Activated T-helper 1 cell treated with anti-CD3 and anti-CD28 coated beads, Interleukin-12 subunit alpha, Interleukin-12 subunit beta, Interleukin-2, Interleukin-4 antibody, amounts not matched to agents 30 ng/mL and 10 ng/mL and 1 ng/mL, durations not matched to agents 14 hours and 24 hours and 36 hours (primary cell): ENCODE measurements at regions of chr11 and their contacts with region 1.

Region 1: DNA sequence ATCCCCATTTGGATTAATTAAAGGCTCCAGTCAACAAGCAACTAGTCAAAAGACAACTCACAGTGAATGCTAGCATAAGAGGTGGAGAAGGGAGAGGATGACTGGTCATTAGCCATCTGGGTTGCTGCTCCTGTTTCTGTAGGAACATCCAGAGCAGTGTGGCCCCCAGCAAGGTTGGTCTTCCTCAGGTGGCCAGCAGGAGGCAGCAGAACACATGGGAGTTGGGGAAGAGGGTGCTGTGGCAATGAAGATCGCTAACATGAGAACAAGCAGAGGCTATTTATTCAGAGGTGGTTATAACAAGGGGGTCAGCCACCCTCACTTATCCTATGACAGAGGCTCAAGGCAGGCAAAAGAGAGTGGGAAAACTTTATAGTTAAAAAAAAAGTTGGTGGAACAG is 21.3 kb downstream of the IZUMO1R start:
- DNase-seq: peak; percentile 44
- H3K4me3 Mint-ChIP-seq: no peak overlapping the region
- H3K27ac Mint-ChIP-seq: no peak overlapping the region
- H3K4me1 Mint-ChIP-seq: no peaks in the 10 kb centered on the region
- H3K27me3 Mint-ChIP-seq: peaks cover 4% of the 10 kb centered on the region

Region 2: GRCh38 chr11:93476796-93477195 is 848.9 kb before region 1 on chr11:
- intact Hi-C with region 1: no loop called
- DNase-seq: no peak
- H3K4me3 Mint-ChIP-seq: no peak overlapping the region
- H3K27ac Mint-ChIP-seq: no peak overlapping the region
- H3K4me1 Mint-ChIP-seq: no peaks in the 10 kb centered on the region
- H3K27me3 Mint-ChIP-seq: no peaks in the 10 kb centered on the region

Region 3: DNA sequence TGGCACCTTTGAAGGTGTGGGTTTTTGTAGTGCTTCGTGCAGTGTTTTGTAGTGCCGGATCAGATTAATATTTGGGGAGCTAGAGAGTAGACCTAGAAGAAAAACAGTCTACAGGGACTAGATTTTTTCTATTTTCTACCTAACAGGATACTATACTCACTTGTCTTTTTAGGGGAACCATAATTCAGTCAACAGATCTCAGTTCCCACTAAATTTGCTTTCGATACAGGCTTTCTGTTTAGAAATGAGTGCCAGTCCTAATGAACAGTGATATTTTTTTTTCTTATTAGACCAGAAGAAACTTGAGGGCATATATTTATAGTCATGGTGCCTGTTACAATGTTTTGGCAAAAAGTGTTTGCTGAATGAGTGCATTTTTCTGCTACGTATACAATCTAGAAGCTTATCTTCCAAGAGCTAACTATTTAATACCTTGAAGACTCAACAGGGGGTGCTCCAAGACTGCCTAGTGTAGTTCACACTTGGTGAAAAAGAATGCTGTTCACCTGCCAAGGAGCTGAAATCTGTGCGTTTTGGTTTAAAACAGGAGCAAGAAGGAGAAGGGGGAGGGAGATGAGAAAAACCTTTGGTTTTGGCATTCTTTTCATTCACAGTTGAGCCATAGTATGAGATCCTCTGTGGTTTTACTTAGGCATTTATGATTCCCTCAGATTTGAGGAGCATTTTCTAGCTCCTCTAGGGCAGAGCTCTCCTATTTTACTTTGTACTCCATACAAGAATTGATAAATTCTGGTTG is 430.4 kb before region 1 on chr11:
- intact Hi-C with region 1: loop called (anchors 1 kb)
- DNase-seq: no peak
- H3K4me3 Mint-ChIP-seq: no peak overlapping the region
- H3K27ac Mint-ChIP-seq: no peak overlapping the region
- H3K4me1 Mint-ChIP-seq: no peaks in the 10 kb centered on the region
- H3K27me3 Mint-ChIP-seq: peaks cover 7% of the 10 kb centered on the region

Region 4: DNA sequence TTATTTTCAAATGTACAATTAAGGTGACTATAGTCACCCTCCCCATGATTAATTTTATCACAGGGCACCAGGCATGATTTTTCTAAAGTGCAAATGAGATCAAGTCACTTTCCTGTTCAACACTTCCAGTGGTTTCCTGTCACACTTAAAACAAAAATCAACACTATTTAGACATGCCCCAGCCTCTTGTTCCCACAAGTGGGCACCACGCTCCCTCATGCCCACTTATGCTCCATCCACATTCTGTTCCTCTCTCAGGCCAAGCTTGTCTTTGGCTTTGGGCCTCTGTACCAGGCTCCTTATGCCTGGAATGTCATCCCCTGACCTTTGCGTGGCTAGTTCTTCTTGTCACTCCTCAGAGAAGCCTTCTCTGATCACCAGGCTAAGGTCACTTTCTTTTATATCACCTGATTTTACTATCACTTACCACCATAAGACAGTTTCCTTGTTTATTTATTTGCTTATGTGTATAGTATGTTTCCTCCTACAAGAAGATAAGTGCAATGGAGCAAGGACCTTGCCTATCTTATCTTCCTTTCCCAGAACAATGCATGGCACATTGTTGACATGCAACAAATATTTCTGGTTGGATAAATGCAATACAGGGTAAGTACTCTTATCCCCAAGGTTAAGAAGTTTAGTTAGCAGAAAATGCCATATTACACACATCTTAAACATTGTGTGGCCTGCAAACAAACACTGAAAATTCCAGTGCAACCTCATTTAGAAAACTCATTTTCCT is 248.0 kb before region 1 on chr11:
- intact Hi-C with region 1: no loop called
- DNase-seq: no peak
- H3K4me3 Mint-ChIP-seq: no peak overlapping the region
- H3K27ac Mint-ChIP-seq: no peak overlapping the region
- H3K4me1 Mint-ChIP-seq: no peaks in the 10 kb centered on the region
- H3K27me3 Mint-ChIP-seq: no peaks in the 10 kb centered on the region

Region 5: DNA sequence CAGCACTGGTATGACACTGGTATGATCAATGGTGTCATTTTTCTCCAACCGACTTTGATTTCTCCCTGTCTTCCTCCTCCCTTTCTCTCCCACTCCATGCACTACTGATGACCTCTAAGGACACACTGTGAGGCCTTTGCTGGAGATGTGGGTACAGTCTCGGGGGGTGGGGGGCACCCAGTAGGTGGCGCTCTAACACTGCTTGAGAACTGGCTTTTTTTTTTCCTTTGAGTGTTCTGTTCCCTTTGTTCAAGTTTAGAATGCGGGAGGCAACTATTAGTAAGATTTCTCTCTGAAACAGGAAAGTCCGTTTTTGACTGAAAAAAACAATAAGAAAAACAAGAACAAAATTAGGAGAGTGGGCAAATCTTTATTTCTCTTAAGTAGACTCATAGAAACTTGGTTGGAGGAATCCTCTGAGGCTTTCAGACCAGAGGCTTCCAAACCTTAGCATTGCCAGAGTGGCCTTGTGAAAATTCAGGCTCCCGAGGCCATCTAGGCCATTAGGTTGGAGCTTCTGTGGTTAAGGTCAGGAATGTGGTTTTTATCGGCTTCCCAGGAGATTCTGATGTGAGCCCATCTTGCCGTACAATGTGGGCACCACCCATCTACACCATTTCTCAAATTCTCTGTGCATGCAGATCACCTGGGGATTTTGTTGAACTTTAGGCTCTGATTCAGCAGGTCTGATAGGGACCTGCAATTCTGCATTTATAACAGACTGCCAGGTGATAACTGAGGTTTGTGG is 153.8 kb before region 1 on chr11:
- intact Hi-C with region 1: loop called (anchors 1 kb)
- DNase-seq: no peak
- H3K4me3 Mint-ChIP-seq: no peak overlapping the region
- H3K27ac Mint-ChIP-seq: no peak overlapping the region
- H3K4me1 Mint-ChIP-seq: peaks cover 16% of the 10 kb centered on the region
- H3K27me3 Mint-ChIP-seq: no peaks in the 10 kb centered on the region

Region 6: DNA sequence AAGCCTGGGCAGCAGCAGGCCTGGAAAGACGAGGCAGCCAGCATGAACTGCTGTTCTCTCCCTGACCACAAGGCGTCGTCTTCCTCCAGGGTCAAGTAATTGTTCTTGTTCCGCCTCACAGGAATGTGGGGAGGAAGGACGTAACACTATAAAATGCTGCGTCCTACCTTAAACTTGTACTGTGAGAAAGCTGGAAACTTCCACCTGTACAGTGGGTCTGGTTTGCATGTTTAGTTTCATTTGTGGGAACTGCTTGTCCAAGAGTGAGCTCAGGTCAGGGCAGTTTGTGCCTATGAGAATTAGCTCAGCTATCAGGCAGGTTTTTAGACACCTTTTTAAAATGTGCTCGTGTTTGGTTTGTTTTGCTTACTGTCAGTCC is 141.8 kb before region 1 on chr11:
- intact Hi-C with region 1: no loop called
- DNase-seq: no peak
- H3K4me3 Mint-ChIP-seq: no peak overlapping the region
- H3K27ac Mint-ChIP-seq: no peak overlapping the region
- H3K4me1 Mint-ChIP-seq: no peaks in the 10 kb centered on the region
- H3K27me3 Mint-ChIP-seq: no peaks in the 10 kb centered on the region

Region 7: DNA sequence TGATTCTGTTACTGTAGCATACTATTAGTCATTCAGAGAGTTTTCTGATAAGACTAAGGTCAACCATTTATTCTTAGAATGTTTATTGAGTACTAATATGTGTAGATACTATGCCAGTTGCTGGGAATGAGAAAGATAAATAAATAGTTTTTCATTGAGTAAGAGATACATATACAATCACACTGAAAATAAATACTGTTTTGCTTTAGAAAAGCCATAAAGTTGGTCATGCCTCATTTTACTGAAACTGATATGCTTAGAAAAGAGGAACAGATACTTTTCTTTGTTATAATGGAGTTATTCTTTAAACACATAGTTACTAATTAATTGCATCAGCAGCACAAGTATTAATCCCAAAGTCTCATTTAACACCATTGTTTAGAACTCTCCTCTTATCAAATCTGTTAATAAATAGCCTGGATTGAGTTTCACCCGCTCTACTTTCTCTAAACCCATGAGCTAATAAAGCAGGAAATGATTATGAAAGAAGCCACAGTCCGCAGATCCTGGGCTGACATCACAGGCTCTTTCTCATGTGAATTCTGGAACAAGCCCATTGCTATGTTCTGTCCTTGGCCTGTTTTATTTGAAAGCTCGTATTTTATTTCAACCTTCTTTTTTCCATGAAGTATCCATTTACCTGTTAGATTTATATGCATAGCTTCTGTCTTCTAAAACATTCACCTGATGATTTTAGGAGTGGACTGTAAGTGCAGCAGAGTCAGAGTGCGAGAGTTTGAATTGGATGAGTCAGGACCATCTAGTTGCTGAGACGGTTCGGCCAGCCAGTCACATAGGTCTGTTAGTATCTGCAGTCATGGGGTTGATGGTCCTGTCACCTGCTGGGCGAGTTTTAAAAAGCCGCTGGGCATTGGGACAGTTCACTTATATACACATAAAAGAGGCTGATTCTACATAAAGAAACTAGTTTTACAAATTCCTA is 277.0 kb after region 1 on chr11:
- intact Hi-C with region 1: loop called (anchors 10 kb)
- DNase-seq: peak; percentile 12
- H3K4me3 Mint-ChIP-seq: no peak overlapping the region
- H3K27ac Mint-ChIP-seq: no peak overlapping the region
- H3K4me1 Mint-ChIP-seq: peaks cover 5% of the 10 kb centered on the region
- H3K27me3 Mint-ChIP-seq: peaks cover 3% of the 10 kb centered on the region